ENCODE measurements at regions of chr4 and their contacts with region 1.

Region 1: GRCh38 chr4:19645589-19645988 is 606.1 kb upstream of the SLIT2 start:
- DNase-seq: no peak
- H3K4me3 ChIP-seq: no peak overlapping the region
- H3K27ac ChIP-seq: no peak overlapping the region
- H3K4me1 ChIP-seq: no peaks in the 10 kb centered on the region
- H3K27me3 ChIP-seq: no peaks in the 10 kb centered on the region
- CTCF ChIP-seq: no peak
- POLR2A ChIP-seq: no peak

Region 2: DNA sequence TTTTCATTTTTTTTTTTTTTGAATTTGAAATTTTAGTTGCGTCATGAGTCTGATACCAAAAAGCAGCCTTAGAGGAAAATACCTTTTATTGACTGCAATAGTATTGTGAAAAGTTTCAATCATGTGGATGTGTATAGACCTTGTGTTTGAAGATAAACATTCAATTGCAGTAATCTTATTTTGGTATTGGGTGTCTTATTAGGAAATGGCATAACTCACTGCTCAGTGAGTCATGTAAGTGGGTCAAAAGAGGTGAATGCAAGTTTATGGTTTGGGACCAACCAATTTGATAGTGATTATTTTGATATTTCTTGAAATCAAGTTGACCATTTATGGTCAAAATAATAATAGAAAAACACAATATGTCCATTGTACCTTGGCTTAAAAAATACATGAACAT is 21.7 kb before region 1 on chr4:
- intact Hi-C with region 1: loop called (anchors 2 kb)
- DNase-seq: no peak
- H3K4me3 ChIP-seq: no peak overlapping the region
- H3K27ac ChIP-seq: no peak overlapping the region
- H3K4me1 ChIP-seq: no peaks in the 10 kb centered on the region
- H3K27me3 ChIP-seq: no peaks in the 10 kb centered on the region
- CTCF ChIP-seq: no peak
- POLR2A ChIP-seq: no peak